PC-3 (cell line): ENCODE measurements at regions of chr1 and their contacts with region 1.

Region 1: GRCh38 chr1:93814059-93814794 is 64.8 kb downstream of the DNTTIP2 start:
- DNase-seq: peak; percentile 95
- ATAC-seq: peak; percentile 70
- H3K4me3 ChIP-seq: no peak overlapping the region
- H3K27ac ChIP-seq: peak overlapping the region; percentile 94
- H3K4me1 ChIP-seq: peaks cover 71% of the 10 kb centered on the region
- H3K27me3 ChIP-seq: no peaks in the 10 kb centered on the region
- CTCF ChIP-seq: peak; percentile 98

Region 2: GRCh38 chr1:93437976-93438605 is 376.1 kb before region 1 on chr1:
- CTCF ChIA-PET with region 1: no interaction called
- POLR2A ChIA-PET with region 1: no interaction called
- intact Hi-C with region 1: loop called (anchors 1 kb)
- DNase-seq: peak; percentile 84
- ATAC-seq: peak; percentile 75
- H3K4me3 ChIP-seq: peak overlapping the region; percentile 52
- H3K27ac ChIP-seq: no peak overlapping the region
- H3K4me1 ChIP-seq: peaks cover 17% of the 10 kb centered on the region
- H3K27me3 ChIP-seq: no peaks in the 10 kb centered on the region
- CTCF ChIP-seq: peak; percentile 83

Region 3: DNA sequence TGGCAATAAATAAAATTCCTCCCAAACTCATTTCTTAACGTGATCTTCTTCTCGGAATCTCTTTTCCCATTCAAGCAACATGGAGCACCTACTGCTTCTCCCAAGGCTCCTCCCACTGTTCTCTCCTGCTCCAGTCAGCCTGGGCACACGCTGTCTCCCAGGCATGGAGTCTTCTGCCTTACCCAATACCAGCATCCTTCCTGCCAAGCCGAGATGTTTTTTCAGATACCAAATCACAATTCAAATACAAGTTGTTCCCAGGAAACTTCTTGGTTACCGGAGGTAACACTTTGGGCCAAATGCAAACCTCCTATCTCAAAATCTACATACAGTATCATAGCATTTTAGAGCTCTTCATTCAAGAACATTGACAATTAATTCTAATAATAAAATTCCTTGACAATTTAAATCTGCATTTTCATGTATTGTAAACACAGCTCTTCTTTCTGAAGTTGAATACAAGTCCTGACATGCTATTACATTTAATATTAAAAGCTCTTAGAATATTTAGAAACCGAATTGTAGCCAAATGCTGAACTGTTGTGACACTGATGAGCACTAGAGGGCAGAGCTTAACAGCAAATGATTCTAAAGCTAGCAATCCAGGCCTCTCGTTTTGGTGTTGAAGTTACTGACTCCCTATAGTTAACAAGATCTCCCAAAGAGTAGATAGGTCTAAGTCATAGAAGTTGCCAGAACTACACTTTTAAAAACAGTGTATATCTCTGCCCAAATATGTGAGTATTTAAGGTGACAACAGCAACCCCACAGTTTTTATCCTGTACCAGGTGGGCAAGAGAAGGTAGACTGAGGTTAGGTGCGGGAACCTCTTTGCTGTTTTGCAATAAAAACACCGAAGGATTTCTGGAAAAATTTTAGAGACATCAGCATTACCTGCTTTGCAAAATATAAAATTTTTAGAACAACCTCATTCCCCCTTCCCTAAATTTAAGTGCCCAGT is 184.8 kb before region 1 on chr1:
- CTCF ChIA-PET with region 1: interaction called, 32 read pairs
- POLR2A ChIA-PET with region 1: no interaction called
- intact Hi-C with region 1: loop called (anchors 1 kb)
- DNase-seq: peak; percentile 85
- ATAC-seq: peak; percentile 64
- H3K4me3 ChIP-seq: no peak overlapping the region
- H3K27ac ChIP-seq: peak overlapping the region; percentile 72
- H3K4me1 ChIP-seq: peaks cover 75% of the 10 kb centered on the region
- H3K27me3 ChIP-seq: no peaks in the 10 kb centered on the region
- CTCF ChIP-seq: peak; percentile 88

Region 4: DNA sequence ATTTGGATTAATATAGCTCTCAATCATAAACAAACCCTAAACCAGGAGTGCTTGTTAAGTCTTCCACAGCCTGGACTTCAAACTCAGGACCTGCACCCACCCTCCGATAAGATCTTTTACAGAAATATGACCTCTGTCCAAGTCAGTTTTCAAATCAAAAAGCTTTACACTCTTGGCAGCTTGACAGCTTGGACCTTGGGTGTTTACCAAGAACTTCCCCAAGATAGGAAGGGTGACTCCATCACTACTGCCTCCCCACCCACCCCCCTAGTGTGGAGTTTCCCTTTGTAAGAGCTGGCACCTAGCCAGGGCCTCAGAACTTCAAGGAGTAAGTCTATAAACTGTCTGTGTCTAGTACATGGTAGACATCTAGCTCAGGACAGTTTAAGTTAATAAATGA is 142.2 kb before region 1 on chr1:
- CTCF ChIA-PET with region 1: interaction called, 7 read pairs
- POLR2A ChIA-PET with region 1: interaction called, 31 read pairs
- intact Hi-C with region 1: no loop called
- DNase-seq: peak; percentile 93
- ATAC-seq: peak; percentile 28
- H3K4me3 ChIP-seq: peak overlapping the region; percentile 43; the same call in 1 of the 2 replicates
- H3K27ac ChIP-seq: peak overlapping the region; percentile 99
- H3K4me1 ChIP-seq: peaks cover 94% of the 10 kb centered on the region
- H3K27me3 ChIP-seq: no peaks in the 10 kb centered on the region
- CTCF ChIP-seq: no peak

Region 5: DNA sequence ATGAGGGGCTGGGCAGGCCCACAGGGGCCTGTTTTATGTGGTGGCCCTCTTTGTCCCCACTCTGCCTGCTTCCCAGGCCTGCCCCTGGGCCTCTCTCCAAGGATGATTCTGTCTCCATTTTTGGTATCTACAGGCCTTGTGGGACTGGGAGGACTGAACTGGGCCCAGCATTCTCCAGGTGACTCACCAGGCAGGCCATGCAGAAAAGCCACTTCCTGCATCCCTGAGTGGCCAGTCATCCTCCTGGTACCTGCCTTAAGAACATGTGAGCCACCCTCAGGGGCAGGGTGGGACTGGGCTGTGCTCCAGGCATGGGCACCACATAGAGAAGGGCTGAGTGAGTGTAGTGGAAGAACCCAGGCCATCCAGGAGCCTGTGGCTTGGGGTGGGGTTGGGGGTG is 112.6 kb before region 1 on chr1:
- CTCF ChIA-PET with region 1: interaction called, 9 read pairs
- POLR2A ChIA-PET with region 1: interaction called, 7 read pairs
- intact Hi-C with region 1: loop called (anchors 1 kb)
- DNase-seq: peak; percentile 99
- ATAC-seq: peak; percentile 74
- H3K4me3 ChIP-seq: no peak overlapping the region
- H3K27ac ChIP-seq: peak overlapping the region; percentile 99
- H3K4me1 ChIP-seq: peaks cover 59% of the 10 kb centered on the region
- H3K27me3 ChIP-seq: no peaks in the 10 kb centered on the region
- CTCF ChIP-seq: no peak

Region 6: DNA sequence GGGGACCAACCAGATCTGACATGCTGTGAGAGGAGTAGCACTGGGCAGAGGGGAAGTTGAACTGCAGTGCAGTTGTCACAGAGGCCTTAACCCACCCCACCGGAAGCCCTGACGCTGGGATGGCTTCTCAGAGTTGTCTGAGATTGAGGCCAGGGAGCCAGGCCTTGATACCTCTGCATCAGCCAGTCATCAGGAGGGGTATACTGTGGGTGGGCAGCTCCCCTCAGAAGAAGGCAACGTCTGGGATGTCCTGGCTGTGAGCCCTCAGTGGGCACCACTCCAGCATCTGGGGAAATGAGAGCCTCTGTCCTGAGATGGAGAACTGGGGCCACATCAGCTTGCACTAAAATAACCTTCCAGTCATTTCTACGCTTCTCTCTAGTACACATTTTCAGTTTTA is 84.7 kb before region 1 on chr1:
- CTCF ChIA-PET with region 1: no interaction called
- POLR2A ChIA-PET with region 1: no interaction called
- intact Hi-C with region 1: no loop called
- DNase-seq: no peak
- ATAC-seq: no peak
- H3K4me3 ChIP-seq: no peak overlapping the region
- H3K27ac ChIP-seq: no peak overlapping the region
- H3K4me1 ChIP-seq: no peaks in the 10 kb centered on the region
- H3K27me3 ChIP-seq: no peaks in the 10 kb centered on the region
- CTCF ChIP-seq: no peak

Region 7: DNA sequence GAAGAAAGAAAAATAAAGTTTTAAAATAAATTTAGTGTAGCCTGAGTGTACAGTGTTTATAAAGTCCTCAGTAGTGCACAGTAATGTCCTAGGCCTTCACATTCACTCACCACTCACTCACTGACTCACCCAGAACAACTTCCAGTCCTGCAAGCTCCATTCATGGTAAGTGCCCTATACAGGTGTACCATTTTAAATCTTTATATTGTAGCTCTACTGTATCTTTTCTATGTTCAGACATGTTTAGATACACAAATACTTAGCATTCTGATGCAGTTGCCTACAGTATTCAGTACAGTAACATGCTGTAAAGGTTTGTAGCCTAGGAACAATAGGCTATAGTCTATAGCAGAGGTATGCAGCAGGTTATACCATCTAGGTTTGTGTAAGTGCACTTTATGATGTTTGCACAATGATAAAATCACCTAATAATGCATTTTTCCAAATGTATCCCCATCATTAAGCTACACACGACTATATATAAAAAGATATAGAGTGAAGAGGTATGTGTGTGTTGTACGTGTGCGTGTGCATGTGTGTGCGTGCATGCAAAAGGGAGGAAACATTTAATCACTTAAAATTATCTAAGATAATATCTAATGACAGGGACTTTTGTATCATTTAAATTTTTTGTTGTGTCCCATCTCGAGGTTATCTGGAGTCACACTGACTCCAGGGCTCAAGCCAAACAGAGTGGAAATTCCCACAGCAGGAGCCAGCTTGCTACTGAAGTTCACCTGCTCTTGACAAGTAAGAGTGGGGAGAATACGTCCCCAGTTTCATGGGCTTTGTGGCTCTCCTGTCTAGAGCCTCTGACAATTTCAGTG is 58.8 kb before region 1 on chr1:
- CTCF ChIA-PET with region 1: interaction called, 5 read pairs
- POLR2A ChIA-PET with region 1: no interaction called
- intact Hi-C with region 1: loop called (anchors 1 kb)
- DNase-seq: peak; percentile 82
- ATAC-seq: peak; percentile 85
- H3K4me3 ChIP-seq: peak overlapping the region; percentile 6; the same call in 1 of the 2 replicates
- H3K27ac ChIP-seq: peak overlapping the region; percentile 94
- H3K4me1 ChIP-seq: peaks cover 66% of the 10 kb centered on the region
- H3K27me3 ChIP-seq: no peaks in the 10 kb centered on the region
- CTCF ChIP-seq: no peak

Region 8: DNA sequence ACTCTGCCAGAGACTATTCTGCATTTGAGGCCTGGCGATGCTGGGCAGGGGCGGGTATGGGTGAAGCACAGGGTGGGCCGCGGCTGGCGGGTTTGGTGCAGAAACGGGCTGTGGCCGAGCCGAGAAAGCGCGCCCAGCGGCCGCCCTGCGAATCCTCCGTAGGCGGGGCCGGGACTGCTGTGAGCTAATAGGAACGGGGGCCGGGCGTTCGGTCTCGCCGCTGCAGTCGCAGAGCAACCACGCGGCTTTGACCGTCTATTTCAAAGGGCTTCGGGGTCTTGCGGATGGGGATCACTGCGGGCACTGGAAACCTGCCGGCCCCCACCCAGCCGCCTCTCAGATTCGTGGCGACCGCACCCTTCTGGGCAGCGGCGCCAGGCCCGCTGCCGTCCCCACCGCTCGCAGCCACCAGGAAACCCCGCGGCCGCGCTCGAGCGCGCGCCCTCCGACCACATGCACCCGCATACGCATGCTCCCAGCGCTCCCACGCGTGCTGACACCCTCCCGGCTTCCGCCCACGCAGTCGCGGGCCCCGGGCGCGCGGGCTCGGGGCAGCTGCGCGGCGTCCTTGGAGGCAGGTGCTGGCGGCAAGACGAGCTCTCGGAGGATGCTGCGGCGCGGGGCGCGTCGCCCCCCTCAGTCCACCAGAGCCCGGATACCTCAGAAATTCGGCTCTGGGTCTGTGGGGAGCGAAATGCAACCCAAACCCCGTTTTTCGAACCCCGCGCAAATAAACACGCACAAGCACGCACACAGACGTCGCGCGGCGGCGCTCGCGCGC is 32.2 kb after region 1 on chr1:
- CTCF ChIA-PET with region 1: interaction called, 7 read pairs
- POLR2A ChIA-PET with region 1: no interaction called
- intact Hi-C with region 1: loop called (anchors 2 kb)
- DNase-seq: peak; percentile 80
- ATAC-seq: peak; percentile 52
- H3K4me3 ChIP-seq: peak overlapping the region; percentile 82
- H3K27ac ChIP-seq: peak overlapping the region; percentile 93
- H3K4me1 ChIP-seq: peaks cover 42% of the 10 kb centered on the region
- H3K27me3 ChIP-seq: no peaks in the 10 kb centered on the region
- CTCF ChIP-seq: peak; percentile 30; the same call in 1 of the 2 replicates